ENCODE measurements at regions of chr19 and their contacts with region 1.

Region 1: DNA sequence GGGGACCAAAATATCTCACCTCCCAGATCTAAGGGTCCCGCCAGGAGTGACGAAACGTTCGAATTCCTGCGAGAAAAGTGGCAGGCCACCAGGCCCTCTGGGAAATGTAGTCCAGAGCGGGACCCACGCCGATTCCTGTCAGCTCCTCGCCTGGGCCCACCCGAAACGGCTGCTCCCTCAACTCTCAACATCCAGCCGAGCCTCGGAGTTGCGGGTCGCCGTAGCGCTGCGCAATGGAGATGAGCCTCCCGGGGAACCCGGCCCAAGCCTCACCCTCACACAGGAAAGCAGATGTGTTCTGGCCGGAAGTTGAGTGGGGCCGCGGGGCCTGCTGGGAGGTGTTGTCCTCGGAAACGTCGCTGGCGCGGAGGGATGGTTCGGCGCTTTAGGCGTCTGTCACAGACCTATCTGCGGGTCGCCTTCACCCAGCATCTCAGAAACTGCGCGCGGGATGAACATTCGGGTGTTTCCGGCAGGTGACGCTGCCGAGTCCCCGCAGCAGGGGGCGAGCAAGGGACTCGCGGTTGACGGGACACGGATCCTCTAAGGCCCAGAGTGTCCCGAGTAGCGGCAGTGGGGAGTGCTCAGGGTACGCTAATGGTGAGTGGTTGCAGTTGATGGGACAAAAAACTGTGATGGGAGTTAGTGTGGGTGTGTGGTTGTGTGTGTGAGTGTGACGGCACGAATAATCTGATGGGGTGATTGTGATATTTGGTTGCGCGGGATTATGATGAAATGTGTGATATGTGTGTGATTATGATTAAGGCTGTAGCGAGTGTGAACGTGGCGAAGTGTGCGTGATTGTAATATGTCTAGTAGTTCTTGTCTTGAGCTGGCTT is at the starts of genes ZNF568 and ZNF829:
- DNase-seq: peak; percentile 92
- H3K4me3 Mint-ChIP-seq: peak within 1 kb of the TSS; percentile 92
- H3K27ac Mint-ChIP-seq: peak within 1 kb of the TSS; percentile 95
- H3K4me1 Mint-ChIP-seq: peaks cover 21% of the 10 kb centered on the region
- H3K27me3 Mint-ChIP-seq: no peaks in the 10 kb centered on the region
- total RNA-seq, gene ZNF568: 4.4 and 4.9 TPM in 2 replicates
- total RNA-seq, gene ZNF829: 5.3 and 5.4 TPM in 2 replicates

Region 2: GRCh38 chr19:36489118-36489919 is 426.9 kb before region 1 on chr19 and contains the start of gene ZNF566:
- intact Hi-C with region 1: loop called (anchors 1 kb)
- DNase-seq: peak; percentile 88
- H3K4me3 Mint-ChIP-seq: peak within 1 kb of the TSS; percentile 96
- H3K27ac Mint-ChIP-seq: peak within 1 kb of the TSS; percentile 97
- H3K4me1 Mint-ChIP-seq: peaks cover 18% of the 10 kb centered on the region
- H3K27me3 Mint-ChIP-seq: no peaks in the 10 kb centered on the region
- total RNA-seq, gene ZNF566: 6.9 and 8.7 TPM in 2 replicates

Region 3: GRCh38 chr19:36687214-36688056 is 228.8 kb before region 1 on chr19 and contains the start of gene ZNF567:
- intact Hi-C with region 1: loop called (anchors 1 kb)
- DNase-seq: peak; percentile 97
- H3K4me3 Mint-ChIP-seq: peak within 1 kb of the TSS; percentile 95
- H3K27ac Mint-ChIP-seq: peak within 1 kb of the TSS; percentile 91
- H3K4me1 Mint-ChIP-seq: peaks cover 24% of the 10 kb centered on the region
- H3K27me3 Mint-ChIP-seq: peaks cover 2% of the 10 kb centered on the region
- total RNA-seq, gene ZNF567: 5.8 and 8.5 TPM in 2 replicates

Region 4: DNA sequence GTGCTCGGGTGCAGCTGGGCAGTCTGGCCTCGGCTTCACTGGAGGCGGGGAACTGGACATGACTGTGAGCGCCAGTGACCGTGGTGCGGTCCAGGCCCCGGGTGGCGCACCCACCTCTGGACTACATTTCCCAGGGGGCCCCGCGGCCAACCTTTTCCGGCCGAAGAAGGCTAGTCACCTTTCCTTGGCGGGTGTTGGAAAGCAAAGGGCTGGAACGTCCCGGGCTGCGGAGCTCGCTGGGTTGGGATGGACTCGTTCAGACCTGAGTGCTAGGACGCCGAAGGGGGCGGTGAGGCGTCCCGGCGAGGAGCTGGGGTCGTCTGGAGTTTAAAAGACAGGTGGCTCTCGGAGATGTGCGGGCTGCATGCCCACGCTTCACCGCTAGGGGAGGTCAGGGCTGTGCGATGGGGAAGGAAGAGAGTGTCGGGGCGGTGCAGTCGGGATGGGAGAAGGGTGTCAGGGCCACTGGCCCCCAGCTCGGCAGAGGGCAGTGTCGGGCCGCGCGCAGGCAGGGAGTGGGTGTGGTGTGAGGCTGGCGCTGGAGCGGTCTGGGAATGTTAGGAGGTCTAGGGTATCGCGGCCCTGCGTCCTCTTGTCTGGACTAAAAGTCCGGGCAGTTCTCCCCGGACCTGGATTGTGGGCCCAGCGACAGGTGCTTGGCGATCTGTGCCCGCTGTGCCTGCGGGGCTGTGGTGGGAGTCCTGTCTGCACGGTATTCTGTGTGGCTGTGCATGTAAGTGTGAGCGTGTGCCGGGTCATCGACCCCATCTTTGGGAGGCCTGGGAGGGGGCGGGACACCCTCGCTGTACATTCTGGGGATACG is 57.0 kb after region 1 on chr19:
- intact Hi-C with region 1: loop called (anchors 1 kb)
- DNase-seq: peak; percentile 67
- H3K4me3 Mint-ChIP-seq: peak overlapping the region; percentile 98
- H3K27ac Mint-ChIP-seq: peak overlapping the region; percentile 87
- H3K4me1 Mint-ChIP-seq: peaks cover 12% of the 10 kb centered on the region
- H3K27me3 Mint-ChIP-seq: no peaks in the 10 kb centered on the region

Region 5: GRCh38 chr19:37370880-37371661 is 454.9 kb after region 1 on chr19 and contains the start of gene ZNF527:
- intact Hi-C with region 1: loop called (anchors 1 kb)
- DNase-seq: peak; percentile 96
- H3K4me3 Mint-ChIP-seq: peak within 1 kb of the TSS; percentile 99
- H3K27ac Mint-ChIP-seq: peak within 1 kb of the TSS; percentile 87
- H3K4me1 Mint-ChIP-seq: peaks cover 13% of the 10 kb centered on the region
- H3K27me3 Mint-ChIP-seq: no peaks in the 10 kb centered on the region
- total RNA-seq, gene ZNF527: 3.9 and 4.5 TPM in 2 replicates

Region 6: DNA sequence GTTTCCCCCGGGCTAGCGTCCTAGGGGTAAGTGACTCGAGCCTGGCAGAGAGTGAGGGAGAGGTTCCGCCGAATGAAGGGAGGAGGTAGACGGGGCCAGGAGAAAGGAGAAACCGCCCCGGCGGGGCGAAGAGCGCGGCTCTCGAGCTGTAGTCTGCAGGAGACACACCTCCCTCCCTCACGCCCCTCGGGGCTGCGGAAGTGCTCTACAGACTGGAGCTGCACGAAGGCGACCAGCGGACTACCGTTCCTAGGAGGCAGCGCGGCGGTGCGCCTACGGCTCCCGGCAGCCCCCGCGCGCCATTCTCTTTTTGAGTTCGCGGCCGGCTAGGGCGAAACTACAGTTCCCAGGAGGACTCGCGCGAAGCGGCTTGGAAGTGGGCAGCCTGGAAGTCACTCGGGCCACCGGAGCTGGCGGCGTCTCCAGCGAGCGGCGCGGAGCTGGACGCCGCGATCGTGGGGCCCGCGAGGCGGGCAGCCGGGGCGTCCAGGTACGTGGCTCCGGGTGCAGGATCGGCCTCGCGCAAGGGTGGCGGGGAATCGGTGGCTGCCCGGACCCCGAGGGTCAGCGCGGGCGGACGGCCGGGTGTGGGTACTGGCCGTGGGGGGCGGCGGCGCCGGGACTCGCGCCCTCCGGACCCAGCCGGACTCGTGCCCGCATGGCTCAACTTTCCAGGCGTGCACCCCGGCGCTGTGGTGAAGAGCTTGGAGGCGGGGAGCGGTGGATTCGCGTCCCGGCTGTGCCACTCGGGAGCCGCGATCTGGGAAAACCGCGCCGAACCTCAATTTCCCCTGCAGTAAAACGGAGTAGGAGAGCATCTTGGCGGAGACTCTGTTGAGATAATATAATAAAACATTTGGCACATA is 990.9 kb after region 1 on chr19 and contains the start of gene SIPA1L3:
- intact Hi-C with region 1: loop called (anchors 2 kb)
- DNase-seq: peak; percentile 91
- H3K4me3 Mint-ChIP-seq: peak within 1 kb of the TSS; percentile 93
- H3K27ac Mint-ChIP-seq: peak within 1 kb of the TSS; percentile 68
- H3K4me1 Mint-ChIP-seq: peaks cover 17% of the 10 kb centered on the region
- H3K27me3 Mint-ChIP-seq: peaks cover 2% of the 10 kb centered on the region
- total RNA-seq, gene SIPA1L3: 16.7 and 18.4 TPM in 2 replicates

Measured in activated T-helper 1 cell treated with anti-CD3 and anti-CD28 coated beads, Interleukin-12 subunit alpha, Interleukin-12 subunit beta, Interleukin-2, Interleukin-4 antibody, amounts not matched to agents 30 ng/mL and 10 ng/mL and 1 ng/mL, durations not matched to agents 14 hours and 24 hours and 36 hours (primary cell).